Psoas muscle (tissue), 8 donors: ENCODE measurements at regions of chr1 and their contacts with region 1.

Region 1: GRCh38 chr1:235367000-235367908 is at the start of gene TBCE:
- DNase-seq: peak; percentile 97 to 98
- ATAC-seq: peak; percentile 99 to 100 (median 100)
- H3K4me3 ChIP-seq: peak within 1 kb of the TSS; percentile 78
- H3K27ac ChIP-seq: peak within 1 kb of the TSS; percentile 87
- H3K4me1 ChIP-seq: no peaks in the 10 kb centered on the region
- H3K27me3 ChIP-seq: no peaks in the 10 kb centered on the region
- CTCF ChIP-seq: no peak
- total RNA-seq, gene TBCE: 20.6 to 26.8 (median 24.1) TPM

Region 2: DNA sequence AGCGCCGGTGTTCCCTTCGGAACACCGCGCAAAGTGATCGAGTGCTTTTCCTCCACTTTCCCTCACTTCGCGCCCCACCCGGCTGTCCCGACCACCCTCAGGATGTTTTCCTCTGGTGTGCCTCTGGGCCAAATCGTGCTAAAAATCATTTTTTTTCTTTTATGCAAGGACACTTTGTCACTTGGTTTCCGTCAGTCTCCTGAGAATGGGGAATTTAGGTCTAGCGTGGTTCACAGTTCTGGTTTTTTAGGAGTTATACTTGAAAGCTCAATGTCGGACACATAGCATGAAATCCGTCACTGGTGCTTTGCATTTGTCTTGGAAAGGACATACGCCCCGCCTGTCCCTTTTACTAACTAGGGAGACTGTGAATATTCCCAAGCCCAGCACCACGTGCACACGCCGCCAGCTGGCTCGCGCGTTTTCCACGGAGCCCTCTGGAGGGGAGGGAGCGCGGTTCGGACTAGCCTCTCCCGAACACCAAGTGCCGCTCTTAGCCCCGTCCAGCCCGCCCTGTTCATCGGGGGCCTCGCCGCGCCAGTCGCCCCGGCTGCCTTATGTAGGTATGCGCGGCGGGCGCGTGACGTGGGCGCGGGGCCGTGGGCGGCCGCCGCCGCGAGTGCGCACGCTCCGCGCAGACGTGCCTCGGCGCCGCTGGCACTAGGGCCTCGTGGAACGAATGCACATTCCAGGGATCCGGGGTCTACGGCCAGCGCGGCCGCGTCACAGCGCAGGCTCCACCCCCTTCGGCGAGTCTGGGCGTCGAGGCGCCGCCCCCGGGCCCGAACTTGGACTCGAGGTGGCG is 756.7 kb before region 1 on chr1:
- intact Hi-C with region 1: no loop called
- DNase-seq: peak; percentile 96 to 98
- ATAC-seq: peak; percentile 63 to 78 (median 72)
- H3K4me3 ChIP-seq: peak overlapping the region; percentile 72
- H3K27ac ChIP-seq: peak overlapping the region; percentile 99
- H3K4me1 ChIP-seq: peaks cover 36% of the 10 kb centered on the region
- H3K27me3 ChIP-seq: no peaks in the 10 kb centered on the region
- CTCF ChIP-seq: peak; percentile 6

Region 3: GRCh38 chr1:235253219-235253962 is 113.9 kb before region 1 on chr1:
- intact Hi-C with region 1: loop called in 1 of 2 experiments (anchors 5 kb)
- DNase-seq: peak; percentile 45 to 68
- ATAC-seq: peak; percentile 88 to 98 (median 98)
- H3K4me3 ChIP-seq: no peak overlapping the region
- H3K27ac ChIP-seq: no peak overlapping the region
- H3K4me1 ChIP-seq: peaks cover 9% of the 10 kb centered on the region
- H3K27me3 ChIP-seq: no peaks in the 10 kb centered on the region
- CTCF ChIP-seq: peak; percentile 83